Prostate gland (tissue), 2 donors: ENCODE measurements at regions of chr11 and their contacts with region 1.

Region 1: GRCh38 chr11:76444384-76445123 is at the start of gene EMSY:
- DNase-seq: peak; percentile 99
- H3K4me3 ChIP-seq: peak within 1 kb of the TSS; percentile 89 to 100
- H3K27ac ChIP-seq: peak within 1 kb of the TSS; percentile 93 to 95
- H3K4me1 ChIP-seq: peaks cover 6% of the 10 kb centered on the region
- H3K27me3 ChIP-seq: no peaks in the 10 kb centered on the region
- CTCF ChIP-seq: peak in 3 of 4 experiments; percentile 6 to 24 (median 7)
- POLR2A ChIP-seq: peak; percentile 95
- total RNA-seq, gene EMSY: 24.3 to 39.4 TPM

Region 2: GRCh38 chr11:75996523-75997442 is 447.8 kb before region 1 on chr11:
- intact Hi-C with region 1: no loop called
- DNase-seq: no peak
- H3K4me3 ChIP-seq: no peak overlapping the region
- H3K27ac ChIP-seq: no peak overlapping the region
- H3K4me1 ChIP-seq: no peaks in the 10 kb centered on the region
- H3K27me3 ChIP-seq: no peaks in the 10 kb centered on the region
- CTCF ChIP-seq: no peak
- POLR2A ChIP-seq: no peak

Region 3: GRCh38 chr11:76235233-76236091 is 209.1 kb before region 1 on chr11:
- intact Hi-C with region 1: loop called (anchors 10 kb)
- DNase-seq: peak; percentile 88
- H3K4me3 ChIP-seq: peak overlapping the region; percentile 47 to 77
- H3K27ac ChIP-seq: peak overlapping the region; percentile 80 to 81
- H3K4me1 ChIP-seq: no peaks in the 10 kb centered on the region
- H3K27me3 ChIP-seq: no peaks in the 10 kb centered on the region
- CTCF ChIP-seq: peak in 1 of 4 experiments; percentile 4
- POLR2A ChIP-seq: peak; percentile 21

Region 4: DNA sequence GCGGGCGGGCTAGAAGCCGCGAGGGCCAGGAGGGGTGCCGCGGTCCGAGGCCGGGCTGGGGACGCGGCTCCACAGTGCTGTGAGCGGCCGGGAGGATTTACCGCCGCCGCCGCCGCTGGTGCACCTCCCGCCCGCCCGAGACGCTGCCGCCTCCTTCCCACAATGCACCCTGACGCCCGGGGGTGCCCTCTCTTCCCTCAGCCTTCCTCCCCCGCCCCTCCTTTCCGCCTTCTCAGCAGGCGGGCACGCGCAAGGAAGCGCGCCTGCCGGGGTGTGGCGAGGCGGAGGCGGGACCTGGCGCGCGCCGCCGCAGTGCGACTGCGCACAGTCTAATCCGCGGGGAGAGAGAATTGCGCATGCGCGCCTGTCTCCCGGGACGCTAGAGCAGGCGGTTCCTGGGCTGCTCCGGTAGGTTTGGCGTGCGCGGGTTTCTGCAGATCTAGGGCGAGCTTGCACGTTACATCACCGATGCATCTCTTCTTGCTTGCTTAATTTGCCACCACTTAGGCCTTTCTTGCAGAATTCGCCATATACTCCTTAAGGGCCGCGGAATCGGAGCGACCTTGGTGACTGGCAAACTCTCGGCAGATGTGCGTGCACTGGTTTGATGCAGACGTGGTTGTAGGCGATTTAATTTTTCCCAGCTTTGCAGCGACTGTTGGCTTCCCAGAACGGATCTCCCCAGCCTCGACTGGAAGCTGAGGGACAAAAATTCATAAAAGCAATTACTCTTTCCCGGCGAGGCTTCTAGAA is 63.4 kb before region 1 on chr11 and contains the starts of genes GVQW3 and THAP12:
- intact Hi-C with region 1: loop called (anchors 5 kb)
- DNase-seq: peak; percentile 96
- H3K4me3 ChIP-seq: peak within 1 kb of the TSS; percentile 81 to 87
- H3K27ac ChIP-seq: peak within 1 kb of the TSS; percentile 76 to 77
- H3K4me1 ChIP-seq: no peaks in the 10 kb centered on the region
- H3K27me3 ChIP-seq: no peaks in the 10 kb centered on the region
- CTCF ChIP-seq: peak in 1 of 4 experiments; percentile 27
- POLR2A ChIP-seq: peak; percentile 84
- total RNA-seq, gene GVQW3: 1.1 to 2.5 TPM
- total RNA-seq, gene THAP12: 26.6 to 31.9 TPM

Region 5: GRCh38 chr11:76807206-76807875 is 362.8 kb after region 1 on chr11:
- intact Hi-C with region 1: no loop called
- DNase-seq: peak; percentile 88
- H3K4me3 ChIP-seq: no peak overlapping the region
- H3K27ac ChIP-seq: no peak overlapping the region
- H3K4me1 ChIP-seq: no peaks in the 10 kb centered on the region
- H3K27me3 ChIP-seq: no peaks in the 10 kb centered on the region
- CTCF ChIP-seq: peak; percentile 71 to 83 (median 76)
- POLR2A ChIP-seq: no peak

Region 6: DNA sequence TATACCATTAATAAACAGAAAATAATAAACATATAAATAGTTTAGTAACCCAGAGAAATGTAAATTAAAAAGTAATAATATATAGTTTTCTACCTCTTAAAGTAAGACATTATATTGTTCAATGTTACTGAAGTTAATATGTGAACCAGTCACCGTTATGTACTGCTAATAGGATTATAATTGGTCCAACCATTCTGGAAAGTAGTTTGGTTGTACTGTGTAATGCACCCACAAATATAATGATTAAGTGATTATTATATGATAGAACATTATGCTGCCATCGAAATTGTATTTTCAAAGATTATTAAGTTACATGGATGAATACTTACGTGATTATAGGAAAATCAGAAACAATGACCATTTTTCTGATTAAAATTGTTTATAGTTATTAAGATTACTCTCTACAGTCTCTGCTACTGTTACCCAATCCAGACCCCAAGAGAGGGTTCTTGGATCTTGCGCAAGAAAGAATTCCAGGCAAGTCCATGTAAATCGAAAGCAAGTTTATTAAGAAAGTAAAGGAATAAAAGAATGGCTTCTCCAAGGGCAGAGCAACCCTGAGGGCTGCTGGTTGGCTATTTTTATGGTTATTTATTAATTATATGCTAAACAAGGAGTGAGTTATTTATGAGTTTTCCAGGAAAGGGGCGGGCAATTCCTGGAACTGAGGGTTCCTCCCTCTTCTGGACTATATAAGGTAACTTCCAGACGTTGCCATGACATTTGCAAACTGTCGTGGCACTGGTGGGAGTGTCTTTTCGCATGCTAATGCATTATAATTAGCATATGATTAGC is 466.3 kb after region 1 on chr11:
- intact Hi-C with region 1: no loop called
- DNase-seq: no peak
- H3K4me3 ChIP-seq: no peak overlapping the region
- H3K27ac ChIP-seq: no peak overlapping the region
- H3K4me1 ChIP-seq: no peaks in the 10 kb centered on the region
- H3K27me3 ChIP-seq: no peaks in the 10 kb centered on the region
- CTCF ChIP-seq: no peak
- POLR2A ChIP-seq: no peak